Activated B cell treated with CpG ODN at 0.5 μM for 24 hours (primary cell): ENCODE measurements at regions of chr1 and their contacts with region 1.

Region 1: DNA sequence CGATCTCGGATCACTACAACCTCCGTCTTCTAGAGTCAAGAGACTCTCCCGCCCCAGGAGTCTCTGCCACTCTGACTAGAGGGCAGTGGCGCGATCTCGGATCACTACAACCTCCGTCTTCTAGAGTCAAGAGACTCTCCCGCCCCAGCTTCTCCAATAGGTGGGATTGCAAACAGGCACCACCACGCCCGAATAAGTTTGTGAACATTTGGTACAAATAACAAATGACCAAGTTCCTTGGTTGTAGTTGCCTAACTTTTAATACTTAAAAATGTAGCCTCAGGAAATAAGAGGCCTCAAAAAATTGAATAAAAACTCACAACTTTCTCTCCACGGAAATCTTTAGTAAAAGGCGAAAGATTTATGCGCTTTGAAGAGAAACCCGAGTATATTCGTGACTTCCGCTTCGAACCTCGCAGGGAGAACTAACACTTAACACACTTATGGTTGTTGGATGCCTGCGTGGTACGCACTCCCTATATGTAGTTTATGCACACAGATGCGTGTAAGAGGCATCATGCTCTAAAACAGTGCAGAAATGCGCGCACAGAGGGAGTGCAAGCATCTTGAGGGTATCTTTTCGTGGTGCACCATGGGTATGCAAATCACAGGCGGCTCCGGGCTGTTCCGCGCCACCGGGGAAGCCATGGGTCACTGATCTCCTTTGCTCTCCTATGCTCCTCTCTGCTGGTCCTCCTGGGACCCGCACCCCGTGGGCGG is 11.4 kb downstream of the BTBD19 start:
- DNase-seq: peak; percentile 80
- ATAC-seq: peak; percentile 85
- H3K4me3 Mint-ChIP-seq: peak overlapping the region; percentile 88
- H3K27ac Mint-ChIP-seq: peak overlapping the region; percentile 100
- H3K4me1 Mint-ChIP-seq: peaks cover 35% of the 10 kb centered on the region
- H3K27me3 Mint-ChIP-seq: no peaks in the 10 kb centered on the region
- CTCF ChIP-seq: no peak

Region 2: DNA sequence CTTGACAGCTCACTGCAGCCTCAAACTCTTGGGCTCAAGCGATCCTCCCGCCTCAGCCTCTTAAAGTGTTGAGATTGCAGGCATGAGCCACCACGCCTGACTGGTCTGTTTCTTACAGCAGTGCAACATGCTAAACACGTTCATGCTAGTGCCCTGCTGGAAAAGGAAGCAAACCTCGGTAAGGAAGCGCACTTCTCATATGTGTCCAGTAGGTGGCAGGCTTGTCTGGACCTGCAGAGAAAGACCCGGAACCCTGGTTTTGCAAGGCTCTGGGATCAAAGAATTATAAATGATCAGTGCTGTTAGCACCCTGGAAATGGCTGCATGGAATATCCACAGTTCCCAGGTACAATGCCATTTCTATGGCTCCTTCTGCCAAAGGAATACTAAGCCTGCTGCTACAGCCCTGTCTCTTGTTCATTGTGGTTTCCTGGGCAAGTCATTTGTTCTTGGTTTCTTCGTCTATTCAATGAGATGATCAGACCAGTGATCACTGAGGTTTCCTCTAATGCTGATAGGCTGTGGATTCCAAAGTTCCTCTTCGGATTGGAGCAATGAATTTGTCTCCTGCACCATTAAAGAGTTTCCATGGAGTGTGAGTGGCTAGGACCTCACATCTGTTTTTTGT is 104.7 kb before region 1 on chr1:
- CTCF ChIA-PET with region 1: no interaction called
- POLR2A ChIA-PET with region 1: interaction called, 193 read pairs
- intact Hi-C with region 1: no loop called
- DNase-seq: no peak
- ATAC-seq: peak; percentile 78
- H3K4me3 Mint-ChIP-seq: peak overlapping the region; percentile 58
- H3K27ac Mint-ChIP-seq: peak overlapping the region; percentile 89
- H3K4me1 Mint-ChIP-seq: peaks cover 75% of the 10 kb centered on the region
- H3K27me3 Mint-ChIP-seq: no peaks in the 10 kb centered on the region
- CTCF ChIP-seq: peak; percentile 72

Region 3: DNA sequence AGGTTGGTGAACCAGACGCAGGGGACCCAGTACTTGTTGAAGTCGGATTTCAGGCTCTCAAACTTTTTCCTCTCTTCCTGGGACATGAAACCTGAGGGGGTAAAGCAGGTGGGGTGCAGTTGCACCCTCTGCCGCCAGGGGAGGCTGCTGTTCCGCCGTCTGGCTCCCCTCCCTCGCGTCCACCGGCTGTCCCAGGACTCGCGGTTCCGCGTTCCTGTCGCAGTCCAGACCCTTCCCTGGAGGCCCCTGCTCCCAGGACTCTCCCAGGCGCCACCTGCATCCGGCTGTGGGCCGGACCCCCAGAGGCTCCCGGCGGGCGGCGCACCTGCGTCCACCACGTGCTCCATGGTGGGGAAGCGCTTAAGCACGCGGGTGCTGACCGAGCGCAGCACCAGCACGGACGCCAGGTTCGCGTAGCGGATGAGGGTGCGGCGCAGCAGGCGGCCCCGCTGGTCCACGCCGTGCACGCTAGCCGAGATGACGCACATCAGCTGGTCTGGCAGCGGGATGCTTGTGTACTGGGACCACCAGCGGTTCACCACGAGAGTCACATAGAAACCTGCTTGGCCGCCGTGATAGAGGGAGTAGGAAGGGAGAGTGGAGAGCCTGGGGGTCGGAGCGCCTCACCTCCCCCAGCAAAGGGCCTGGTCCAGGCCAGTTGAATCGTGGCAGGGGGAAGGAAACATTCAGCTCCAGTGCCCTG is 33.5 kb before region 1 on chr1:
- CTCF ChIA-PET with region 1: interaction called, 3 read pairs
- POLR2A ChIA-PET with region 1: interaction called, 113 read pairs
- intact Hi-C with region 1: loop called (anchors 1 kb)
- DNase-seq: peak; percentile 81
- ATAC-seq: peak; percentile 79
- H3K4me3 Mint-ChIP-seq: peak overlapping the region; percentile 75
- H3K27ac Mint-ChIP-seq: peak overlapping the region; percentile 86
- H3K4me1 Mint-ChIP-seq: peaks cover 32% of the 10 kb centered on the region
- H3K27me3 Mint-ChIP-seq: no peaks in the 10 kb centered on the region
- CTCF ChIP-seq: peak; percentile 100

Region 4: DNA sequence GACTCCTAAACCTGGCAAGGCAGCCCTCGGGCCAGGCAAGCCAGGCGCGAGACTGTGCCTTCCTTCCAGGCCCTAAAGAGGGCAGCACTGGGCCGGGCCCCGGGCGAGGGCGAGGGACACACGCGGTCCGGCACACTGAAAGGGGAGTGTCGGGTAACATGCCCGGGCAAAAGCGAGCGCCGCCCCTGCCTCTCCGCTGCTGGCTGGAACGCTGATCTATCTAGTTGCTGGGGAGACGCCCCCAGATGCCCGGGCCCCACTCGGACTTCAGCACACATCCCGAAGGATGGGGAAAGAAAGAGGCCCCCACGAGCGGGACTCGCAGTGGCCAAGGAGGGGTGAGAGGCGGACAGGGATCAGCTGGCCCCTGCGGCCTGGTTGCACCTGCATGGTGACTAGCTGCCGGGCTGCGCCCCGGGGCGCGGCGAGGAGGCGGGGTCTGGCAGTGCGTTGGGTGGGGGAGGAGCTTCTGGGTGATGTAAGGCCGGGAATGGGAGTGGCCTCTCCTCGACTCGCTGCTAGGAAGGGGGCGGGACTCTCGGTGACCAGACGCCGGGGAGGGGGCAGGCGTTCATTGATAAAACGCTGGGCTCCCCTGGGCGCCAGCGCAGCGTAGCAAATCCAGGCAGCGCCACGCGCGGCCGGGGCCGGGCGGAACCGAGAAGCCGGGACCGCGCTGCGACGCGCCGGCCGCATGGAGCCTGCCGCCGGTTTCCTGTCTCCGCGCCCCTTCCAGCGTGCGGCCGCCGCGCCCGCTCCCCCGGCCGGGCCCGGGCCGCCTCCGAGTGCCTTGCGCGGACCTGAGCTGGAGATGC is 19.8 kb before region 1 on chr1 and contains the start of gene PLK3:
- CTCF ChIA-PET with region 1: interaction called, 20 read pairs
- POLR2A ChIA-PET with region 1: interaction called, 364 read pairs
- intact Hi-C with region 1: loop called (anchors 1 kb)
- DNase-seq: peak; percentile 94
- ATAC-seq: peak; percentile 88
- H3K4me3 Mint-ChIP-seq: peak within 1 kb of the TSS; percentile 97
- H3K27ac Mint-ChIP-seq: peak within 1 kb of the TSS; percentile 100
- H3K4me1 Mint-ChIP-seq: peaks cover 33% of the 10 kb centered on the region
- H3K27me3 Mint-ChIP-seq: no peaks in the 10 kb centered on the region
- CTCF ChIP-seq: peak; percentile 30
- total RNA-seq, gene PLK3: 63.0 and 82.0 TPM in 2 replicates

Region 5: GRCh38 chr1:44830900-44831304 is 11.1 kb after region 1 on chr1:
- CTCF ChIA-PET with region 1: interaction called, 3 read pairs
- POLR2A ChIA-PET with region 1: interaction called, 16 read pairs
- intact Hi-C with region 1: loop called (anchors 1 kb)
- DNase-seq: no peak
- ATAC-seq: no peak
- H3K4me3 Mint-ChIP-seq: no peak overlapping the region
- H3K27ac Mint-ChIP-seq: no peak overlapping the region
- H3K4me1 Mint-ChIP-seq: peaks cover 10% of the 10 kb centered on the region
- H3K27me3 Mint-ChIP-seq: no peaks in the 10 kb centered on the region
- CTCF ChIP-seq: no peak

Region 6: DNA sequence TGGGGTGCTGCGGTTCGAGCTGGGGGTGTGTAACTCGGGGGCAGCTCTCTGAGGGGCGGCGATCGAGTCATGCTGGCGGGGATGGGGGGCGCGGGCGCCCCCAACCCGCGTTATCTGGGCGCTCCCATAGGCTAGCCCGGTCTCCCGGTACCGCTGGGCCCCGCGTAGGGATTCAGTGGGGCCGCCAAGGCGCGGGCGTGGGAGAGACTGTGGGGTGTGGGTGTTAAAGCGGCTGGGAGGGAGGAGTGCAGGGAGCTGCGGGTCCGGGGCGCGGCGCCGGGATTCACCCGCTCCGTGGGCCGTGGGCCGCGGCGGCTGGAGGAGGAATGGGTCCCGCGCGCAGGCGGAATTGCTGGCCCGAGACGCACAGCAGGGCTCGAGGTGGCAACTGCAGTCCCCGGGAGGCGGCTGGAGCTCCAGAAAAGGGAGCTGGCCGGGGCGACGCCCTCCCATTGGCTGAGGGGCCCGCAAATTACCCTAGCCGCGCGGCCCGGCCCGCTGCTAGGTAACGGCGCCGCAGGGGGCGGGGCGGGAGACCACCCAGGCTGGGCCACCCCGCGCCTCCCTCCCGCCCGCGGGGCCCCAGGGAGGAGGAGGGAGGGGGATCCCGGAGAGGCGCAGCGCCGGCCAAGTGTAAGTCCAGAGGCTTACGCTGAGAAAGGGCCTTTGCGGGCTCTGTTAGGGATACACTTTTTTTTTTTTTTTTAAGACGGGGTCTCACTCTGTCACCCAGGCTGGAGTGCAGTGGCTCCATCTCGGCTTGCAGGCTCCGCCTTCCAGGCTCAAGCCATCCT is 23.3 kb after region 1 on chr1 and contains the start of gene PTCH2:
- CTCF ChIA-PET with region 1: no interaction called
- POLR2A ChIA-PET with region 1: interaction called, 11 read pairs
- intact Hi-C with region 1: no loop called
- DNase-seq: peak; percentile 48
- ATAC-seq: peak; percentile 78
- H3K4me3 Mint-ChIP-seq: peak within 1 kb of the TSS; percentile 64
- H3K27ac Mint-ChIP-seq: no peak within 1 kb of the TSS
- H3K4me1 Mint-ChIP-seq: peaks cover 6% of the 10 kb centered on the region
- H3K27me3 Mint-ChIP-seq: peaks cover 4% of the 10 kb centered on the region
- CTCF ChIP-seq: no peak
- total RNA-seq, gene PTCH2: 1.2 TPM in 2 replicates

Region 7: DNA sequence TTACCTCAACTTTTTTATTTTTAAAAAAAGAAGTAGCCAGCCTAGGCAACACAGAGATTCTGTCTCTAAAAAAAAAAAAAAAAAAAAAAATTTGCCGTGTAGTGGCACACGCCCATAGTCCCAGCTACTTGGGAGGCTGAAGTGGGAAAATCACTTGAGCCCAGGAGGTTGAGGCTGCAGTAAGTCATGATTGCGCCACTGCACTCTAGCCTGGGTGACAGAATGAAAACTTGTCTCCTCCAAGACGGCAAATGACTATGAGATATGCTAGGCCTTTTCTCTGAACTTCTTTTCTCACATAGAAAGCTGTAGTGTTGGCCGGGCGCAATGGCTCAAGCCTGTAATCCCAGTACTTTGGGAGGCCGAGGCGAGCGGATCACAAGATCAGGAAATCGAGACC is 48.0 kb after region 1 on chr1:
- CTCF ChIA-PET with region 1: no interaction called
- POLR2A ChIA-PET with region 1: no interaction called
- intact Hi-C with region 1: no loop called
- DNase-seq: no peak
- ATAC-seq: no peak
- H3K4me3 Mint-ChIP-seq: no peak overlapping the region
- H3K27ac Mint-ChIP-seq: no peak overlapping the region
- H3K4me1 Mint-ChIP-seq: no peaks in the 10 kb centered on the region
- H3K27me3 Mint-ChIP-seq: no peaks in the 10 kb centered on the region
- CTCF ChIP-seq: no peak

Region 8: DNA sequence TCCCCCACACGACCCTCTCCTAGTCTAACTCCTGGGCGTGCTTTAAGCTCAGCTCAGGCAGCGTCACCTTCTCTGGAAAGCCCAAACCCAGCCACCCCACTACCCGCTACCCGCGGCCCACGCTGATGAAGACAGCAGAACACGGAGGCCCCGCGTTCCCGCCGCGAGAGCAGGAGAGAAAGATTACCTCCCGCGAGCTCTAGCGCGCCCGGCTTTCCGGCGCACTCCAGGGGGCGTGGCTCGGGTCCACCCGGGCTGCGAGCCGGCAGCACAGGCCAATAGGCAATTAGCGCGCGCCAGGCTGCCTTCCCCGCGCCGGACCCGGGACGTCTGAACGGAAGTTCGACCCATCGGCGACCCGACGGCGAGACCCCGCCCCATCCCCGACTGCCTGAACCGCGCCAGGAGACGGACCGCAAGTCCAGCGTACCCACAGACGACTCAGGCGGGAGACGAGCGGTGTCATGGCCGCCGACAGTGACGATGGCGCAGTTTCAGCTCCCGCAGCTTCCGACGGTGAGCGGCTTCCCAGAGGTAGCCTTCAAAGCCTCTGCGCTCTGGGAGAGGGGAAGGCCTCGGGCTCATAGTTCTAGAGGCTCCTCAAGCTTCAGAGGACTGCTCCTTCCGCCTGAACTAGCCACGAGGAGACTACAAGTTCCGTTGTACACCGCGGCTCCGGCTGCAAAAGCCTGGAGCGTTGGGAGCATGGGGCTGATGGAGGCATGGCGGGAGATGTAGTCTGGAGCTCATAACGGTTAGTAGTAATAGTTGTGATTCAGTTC is 520.2 kb after region 1 on chr1 and contains the starts of genes MUTYH and TOE1:
- CTCF ChIA-PET with region 1: no interaction called
- POLR2A ChIA-PET with region 1: interaction called, 15 read pairs
- intact Hi-C with region 1: no loop called
- DNase-seq: peak; percentile 85
- ATAC-seq: peak; percentile 86
- H3K4me3 Mint-ChIP-seq: peak within 1 kb of the TSS; percentile 100
- H3K27ac Mint-ChIP-seq: peak within 1 kb of the TSS; percentile 99
- H3K4me1 Mint-ChIP-seq: peaks cover 39% of the 10 kb centered on the region
- H3K27me3 Mint-ChIP-seq: no peaks in the 10 kb centered on the region
- CTCF ChIP-seq: no peak
- total RNA-seq, gene MUTYH: 61.0 and 63.0 TPM in 2 replicates
- total RNA-seq, gene TOE1: 24.6 and 25.3 TPM in 2 replicates